ENCODE measurements at regions of chr1 and their contacts with region 1.

Region 1: DNA sequence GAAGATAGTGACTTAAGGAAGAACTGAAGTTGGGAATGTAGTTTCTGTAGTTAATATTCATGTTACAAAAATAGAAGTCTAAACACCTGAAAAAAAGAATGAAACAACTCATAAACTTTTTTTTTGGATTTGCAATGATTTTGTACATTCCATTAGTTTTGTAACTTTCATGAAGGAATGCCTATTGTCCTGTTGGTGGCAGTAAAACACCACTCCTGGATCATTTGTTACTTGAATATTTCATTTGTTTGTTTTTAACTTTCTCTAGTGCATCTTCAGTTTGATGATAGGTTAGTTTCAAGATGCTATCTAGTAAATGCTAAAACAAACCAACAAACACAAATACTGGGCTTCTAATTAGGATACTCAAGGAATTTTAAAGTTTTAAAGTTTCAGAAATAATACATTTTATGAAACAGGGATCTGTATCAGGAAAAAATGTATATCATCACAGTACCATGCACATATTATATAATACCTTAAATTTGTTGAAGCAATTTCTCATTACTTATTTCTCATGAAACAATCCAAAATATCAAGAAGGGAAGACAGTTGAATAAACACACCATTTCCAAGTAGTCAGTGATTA is 229.7 kb upstream of the CACYBP start:
- DNase-seq: no peak
- ATAC-seq: no peak
- H3K4me3 ChIP-seq: no peak overlapping the region
- H3K27ac ChIP-seq: no peak overlapping the region
- H3K4me1 ChIP-seq: no peaks in the 10 kb centered on the region
- H3K27me3 ChIP-seq: no peaks in the 10 kb centered on the region

Region 2: DNA sequence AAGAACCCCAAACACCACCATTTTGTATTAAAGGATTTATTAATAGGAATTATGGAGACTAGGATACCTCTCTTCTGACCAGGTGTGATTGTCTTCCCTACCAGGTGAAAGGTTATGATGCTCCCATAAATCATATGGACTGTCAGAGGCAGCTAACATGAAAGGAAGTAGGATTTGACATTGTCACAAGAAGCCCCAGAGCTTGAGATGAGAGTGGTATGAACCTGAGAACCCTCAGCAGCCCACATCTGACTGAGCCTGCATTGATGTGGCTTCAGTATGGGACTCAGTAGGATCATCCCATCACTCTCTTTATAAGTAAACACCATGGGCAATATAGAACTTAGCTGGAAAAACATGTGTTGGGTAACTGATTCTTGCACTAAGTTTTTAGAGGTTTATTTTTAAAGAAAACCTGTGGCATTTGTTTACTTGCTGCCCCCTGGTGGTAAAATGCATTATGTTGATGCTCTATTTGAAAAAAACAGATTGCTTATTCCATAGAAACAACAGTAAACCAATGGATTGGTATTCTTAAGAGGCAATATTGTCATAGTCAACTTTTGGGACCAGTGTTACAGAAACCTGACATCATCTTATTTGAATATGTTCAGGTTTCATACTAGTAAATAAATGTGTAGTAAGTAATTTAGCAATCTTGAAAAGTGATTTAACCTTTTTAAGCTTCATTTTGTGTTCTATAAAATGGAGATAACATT is 213.1 kb after region 1 on chr1:
- intact Hi-C with region 1: loop called (anchors 1 to 5 kb)
- DNase-seq: no peak
- ATAC-seq: no peak
- H3K4me3 ChIP-seq: no peak overlapping the region
- H3K27ac ChIP-seq: no peak overlapping the region
- H3K4me1 ChIP-seq: no peaks in the 10 kb centered on the region
- H3K27me3 ChIP-seq: no peaks in the 10 kb centered on the region

Region 3: DNA sequence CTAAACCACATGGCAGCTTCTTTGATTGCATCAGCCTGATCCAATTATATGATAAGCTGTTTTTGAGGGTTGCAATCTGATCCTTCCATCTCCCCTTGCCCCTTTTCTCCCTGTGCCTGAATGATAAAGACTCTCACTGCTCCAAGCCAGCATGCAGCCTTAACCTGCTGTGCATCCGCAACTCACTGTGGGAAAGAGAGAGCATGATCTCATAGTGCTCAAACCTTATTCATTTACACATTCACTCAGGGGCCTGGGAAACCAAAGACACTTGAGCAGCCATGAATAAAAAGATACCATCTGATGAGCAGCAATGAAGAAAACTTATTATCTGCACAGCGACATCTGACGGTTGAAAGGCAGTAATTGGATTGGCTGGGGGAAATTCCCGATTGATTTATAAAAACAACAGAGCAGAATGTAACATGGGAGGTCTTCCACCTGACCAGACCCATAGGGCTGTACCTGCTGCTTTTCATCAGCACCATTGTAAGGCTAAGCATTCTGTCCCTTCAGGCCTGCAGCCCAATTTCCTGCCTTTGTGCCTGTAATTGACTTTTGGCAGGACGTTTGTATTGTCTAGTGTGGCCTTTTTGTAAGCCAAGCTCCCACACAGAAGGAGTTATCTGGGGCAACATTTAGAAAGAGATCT is 360.1 kb after region 1 on chr1:
- intact Hi-C with region 1: loop called in 1 of 2 experiments (anchors 10 kb)
- DNase-seq: no peak
- ATAC-seq: no peak
- H3K4me3 ChIP-seq: no peak overlapping the region
- H3K27ac ChIP-seq: no peak overlapping the region
- H3K4me1 ChIP-seq: peaks cover 3 to 5% of the 10 kb centered on the region in 2 donors
- H3K27me3 ChIP-seq: no peaks in the 10 kb centered on the region

Measured in aorta (tissue), 5 donors.